ENCODE measurements at regions of chr7 and their contacts with region 1.

Region 1: DNA sequence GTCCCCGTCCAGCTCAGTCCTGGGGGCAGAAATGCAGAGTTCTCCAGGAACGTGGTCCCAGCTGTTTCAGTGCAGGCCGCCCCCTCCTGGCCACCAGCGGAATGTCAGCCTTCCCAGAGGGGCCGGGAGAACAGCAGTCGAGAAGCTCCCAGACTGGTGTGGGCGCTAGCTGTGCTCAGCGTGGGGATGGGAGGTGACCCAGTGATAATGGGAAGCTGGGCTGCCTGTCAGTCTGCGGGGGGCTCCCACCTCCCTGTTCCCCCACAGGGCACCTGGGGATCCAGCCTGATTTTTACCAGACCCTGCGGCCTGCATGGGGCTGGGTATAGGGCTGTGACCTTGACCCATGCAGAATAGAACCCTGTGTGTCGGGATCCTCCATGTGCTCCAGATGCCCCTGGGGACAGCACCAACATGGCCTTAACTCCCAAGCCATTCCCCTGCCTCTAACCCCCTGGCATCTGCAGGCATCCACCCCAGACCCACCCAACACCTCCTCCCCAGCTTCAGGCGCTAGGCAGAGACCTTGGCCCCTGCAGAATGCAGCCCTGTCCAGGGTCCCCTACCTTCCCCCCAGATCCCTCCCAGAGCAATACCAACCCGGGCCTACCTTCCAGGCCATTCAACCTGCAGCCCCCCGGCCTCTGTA is 946 bp upstream of the ELN start:
- DNase-seq: peak; percentile 68
- ATAC-seq: peak; percentile 68 to 96 (median 88)
- H3K4me3 ChIP-seq: no peak overlapping the region
- H3K4me3 Mint-ChIP-seq: no peak overlapping the region
- H3K27ac ChIP-seq: no peak overlapping the region
- H3K27ac Mint-ChIP-seq: no peak overlapping the region
- H3K4me1 ChIP-seq: peaks cover 6% of the 10 kb centered on the region
- H3K4me1 Mint-ChIP-seq: peaks cover 20 to 30% of the 10 kb centered on the region in 2 donors
- H3K27me3 ChIP-seq: peaks cover 33% of the 10 kb centered on the region
- H3K27me3 Mint-ChIP-seq: peaks cover 37 to 38% of the 10 kb centered on the region in 2 donors
- CTCF ChIP-seq: peak; percentile 93

Region 2: GRCh38 chr7:73865738-73866445 is 161.1 kb before region 1 on chr7:
- intact Hi-C with region 1: loop called (anchors 1 kb)
- DNase-seq: no peak
- ATAC-seq: peak in 2 of 3 donors; percentile 53 to 57
- H3K4me3 ChIP-seq: no peak overlapping the region
- H3K4me3 Mint-ChIP-seq: no peak overlapping the region
- H3K27ac ChIP-seq: no peak overlapping the region
- H3K27ac Mint-ChIP-seq: no peak overlapping the region
- H3K4me1 ChIP-seq: no peaks in the 10 kb centered on the region
- H3K4me1 Mint-ChIP-seq: no peaks in the 10 kb centered on the region
- H3K27me3 ChIP-seq: no peaks in the 10 kb centered on the region
- H3K27me3 Mint-ChIP-seq: no peaks in the 10 kb centered on the region
- CTCF ChIP-seq: peak; percentile 35

Region 3: DNA sequence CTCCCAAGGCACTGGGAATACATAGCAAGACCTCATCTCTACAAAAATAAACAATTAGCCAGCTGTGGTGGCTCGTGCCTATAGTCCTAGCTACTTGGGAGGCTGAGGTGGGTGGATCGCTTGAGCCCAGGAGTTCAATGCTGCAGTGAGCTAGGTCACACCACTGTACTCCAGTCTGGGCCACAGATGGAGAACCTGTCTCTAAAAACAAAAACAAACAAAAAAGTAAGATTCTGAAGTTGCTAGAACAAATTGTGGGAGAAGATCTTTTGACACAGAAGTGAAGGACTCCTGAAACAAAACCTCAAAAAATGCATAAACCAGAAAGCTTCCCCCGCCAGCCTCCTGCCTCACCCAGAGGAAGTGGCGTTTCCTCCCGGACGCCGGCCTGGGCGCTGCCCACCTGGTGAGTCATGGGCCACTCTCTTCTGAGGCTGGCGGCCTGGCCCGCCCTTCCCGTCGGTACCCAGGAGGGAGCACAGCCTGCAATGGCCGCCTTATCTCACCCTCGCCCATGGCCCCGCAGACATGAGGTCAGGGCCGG is 24.5 kb before region 1 on chr7:
- intact Hi-C with region 1: no loop called
- DNase-seq: peak in 1 of 2 donors; percentile 44
- ATAC-seq: peak; percentile 73 to 94 (median 93)
- H3K4me3 ChIP-seq: no peak overlapping the region
- H3K4me3 Mint-ChIP-seq: peak overlapping the region; percentile 80
- H3K27ac ChIP-seq: peak overlapping the region; percentile 68
- H3K27ac Mint-ChIP-seq: peak overlapping the region; percentile 81 to 91
- H3K4me1 ChIP-seq: peaks cover 20% of the 10 kb centered on the region
- H3K4me1 Mint-ChIP-seq: peaks cover 22 to 34% of the 10 kb centered on the region in 2 donors
- H3K27me3 ChIP-seq: no peaks in the 10 kb centered on the region
- H3K27me3 Mint-ChIP-seq: no peaks in the 10 kb centered on the region
- CTCF ChIP-seq: no peak

Region 4: DNA sequence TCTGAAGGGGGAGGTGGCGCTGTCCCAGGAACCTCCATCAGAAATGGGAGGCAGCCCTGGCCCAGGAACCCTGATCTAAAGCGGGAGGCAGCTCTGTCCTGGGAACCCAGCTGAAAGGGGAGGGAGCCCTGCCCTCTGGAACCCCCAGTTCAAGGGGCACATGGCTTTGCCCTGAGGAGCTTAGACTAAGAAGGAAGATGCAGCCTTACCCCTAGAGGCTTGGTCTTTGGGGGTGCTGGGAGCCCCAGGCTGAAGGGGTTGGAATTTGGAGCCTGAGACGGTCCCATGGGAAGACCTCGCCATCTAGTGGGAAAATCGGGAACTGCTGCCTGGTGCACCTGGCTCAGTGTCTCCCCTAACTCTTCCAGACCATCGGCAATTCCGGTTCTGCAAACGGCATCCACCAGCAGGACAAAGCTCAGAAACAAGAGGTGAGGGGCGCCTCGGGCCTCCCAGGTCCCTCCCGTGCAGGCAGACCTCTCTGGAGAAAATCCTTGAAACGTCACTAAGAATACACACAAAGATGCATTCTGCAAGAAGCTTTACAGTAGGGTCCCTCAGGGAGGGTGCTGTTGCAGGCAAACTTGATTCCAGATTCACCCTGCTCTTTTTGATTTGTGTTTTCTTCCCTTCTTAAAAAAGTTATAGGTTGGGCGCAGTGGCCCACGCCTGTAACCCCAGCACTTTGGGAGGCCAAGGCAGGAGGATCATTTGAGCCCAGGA is 374.3 kb after region 1 on chr7:
- intact Hi-C with region 1: loop called (anchors 2 kb)
- DNase-seq: peak; percentile 74 to 85
- ATAC-seq: peak; percentile 68 to 95 (median 87)
- H3K4me3 ChIP-seq: no peak overlapping the region
- H3K4me3 Mint-ChIP-seq: no peak overlapping the region
- H3K27ac ChIP-seq: no peak overlapping the region
- H3K27ac Mint-ChIP-seq: no peak overlapping the region
- H3K4me1 ChIP-seq: no peaks in the 10 kb centered on the region
- H3K4me1 Mint-ChIP-seq: no peaks in the 10 kb centered on the region
- H3K27me3 ChIP-seq: no peaks in the 10 kb centered on the region
- H3K27me3 Mint-ChIP-seq: no peaks in the 10 kb centered on the region
- CTCF ChIP-seq: peak; percentile 87